ENCODE measurements at regions of chr2 and their contacts with region 1.

Region 1: GRCh38 chr2:239322416-239323086 is 78.3 kb downstream of the HDAC4 start:
- DNase-seq: peak; percentile 41
- ATAC-seq: peak; percentile 1
- H3K4me3 Mint-ChIP-seq: peak overlapping the region; percentile 78
- H3K27ac Mint-ChIP-seq: peak overlapping the region; percentile 99
- H3K4me1 Mint-ChIP-seq: peaks cover 72% of the 10 kb centered on the region
- H3K27me3 Mint-ChIP-seq: no peaks in the 10 kb centered on the region

Region 2: GRCh38 chr2:239267288-239267951 is 55.1 kb before region 1 on chr2:
- POLR2A ChIA-PET with region 1: interaction called, 22 read pairs
- DNase-seq: peak; percentile 85
- ATAC-seq: peak; percentile 77
- H3K4me3 Mint-ChIP-seq: peak overlapping the region; percentile 90
- H3K27ac Mint-ChIP-seq: peak overlapping the region; percentile 97
- H3K4me1 Mint-ChIP-seq: peaks cover 62% of the 10 kb centered on the region
- H3K27me3 Mint-ChIP-seq: no peaks in the 10 kb centered on the region

Region 3: DNA sequence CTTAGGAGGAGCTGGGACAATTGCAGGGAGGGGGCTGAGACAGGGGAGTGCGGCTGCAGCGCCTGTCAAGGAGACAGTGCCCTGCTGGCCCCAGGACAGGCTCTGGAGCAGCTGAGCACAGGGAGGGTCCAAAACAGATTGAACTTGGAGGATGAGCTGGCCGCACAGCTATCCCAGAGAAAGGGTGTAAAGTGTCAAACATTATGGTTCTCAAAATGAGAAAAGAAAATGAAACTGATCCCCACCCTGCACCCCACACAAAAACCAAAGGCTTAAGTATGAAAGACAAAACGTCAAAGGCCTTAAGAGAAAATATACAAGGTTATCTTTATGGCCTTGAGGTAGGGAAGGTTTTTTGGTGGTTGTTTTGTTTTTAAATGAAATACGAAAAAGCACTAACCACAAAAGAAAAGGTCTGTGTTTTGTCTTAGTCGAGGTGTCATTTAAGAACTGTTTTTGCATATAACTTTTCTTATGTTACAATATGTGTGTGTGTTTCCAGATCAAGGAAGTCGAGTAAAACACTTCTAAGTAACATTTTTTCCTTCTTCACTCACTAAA is 33.5 kb before region 1 on chr2:
- POLR2A ChIA-PET with region 1: interaction called, 56 read pairs
- DNase-seq: peak; percentile 60
- ATAC-seq: peak; percentile 57
- H3K4me3 Mint-ChIP-seq: peak overlapping the region; percentile 88
- H3K27ac Mint-ChIP-seq: peak overlapping the region; percentile 99
- H3K4me1 Mint-ChIP-seq: peaks cover 62% of the 10 kb centered on the region
- H3K27me3 Mint-ChIP-seq: no peaks in the 10 kb centered on the region

Region 4: DNA sequence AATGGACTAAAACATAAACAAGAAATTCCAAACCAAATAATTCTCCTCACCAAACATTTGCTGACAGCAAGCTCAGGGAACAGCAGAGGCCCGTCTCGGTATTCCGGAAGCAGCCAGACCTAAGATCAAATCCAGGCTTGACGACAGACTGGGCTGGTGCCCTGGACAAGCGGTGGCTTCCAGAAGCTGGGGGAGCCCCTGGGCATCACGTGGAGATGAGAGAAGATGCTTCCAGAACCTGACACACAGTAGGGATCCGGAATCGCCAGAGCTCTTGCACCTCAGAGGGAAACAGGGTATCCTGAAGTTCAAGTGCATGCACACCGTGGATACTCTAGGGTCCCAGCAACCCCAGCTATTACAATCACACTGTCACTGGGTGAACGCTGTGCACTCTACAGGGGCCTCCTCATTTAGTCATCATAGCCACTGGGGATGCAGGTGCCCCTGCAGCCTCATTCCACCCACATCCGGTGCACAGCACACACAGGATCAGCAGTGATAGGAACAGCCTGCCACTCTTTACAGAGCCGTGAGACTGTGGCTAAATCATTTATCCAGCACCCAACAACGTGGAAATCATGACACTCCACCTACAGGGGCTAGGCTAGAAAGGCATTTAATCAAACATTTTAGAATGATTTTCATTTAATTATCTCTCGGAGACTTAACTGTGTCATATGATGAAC is 24.3 kb before region 1 on chr2:
- POLR2A ChIA-PET with region 1: interaction called, 56 read pairs
- DNase-seq: peak; percentile 75
- ATAC-seq: peak; percentile 93
- H3K4me3 Mint-ChIP-seq: peak overlapping the region; percentile 88
- H3K27ac Mint-ChIP-seq: peak overlapping the region; percentile 95
- H3K4me1 Mint-ChIP-seq: peaks cover 51% of the 10 kb centered on the region
- H3K27me3 Mint-ChIP-seq: no peaks in the 10 kb centered on the region

Region 5: DNA sequence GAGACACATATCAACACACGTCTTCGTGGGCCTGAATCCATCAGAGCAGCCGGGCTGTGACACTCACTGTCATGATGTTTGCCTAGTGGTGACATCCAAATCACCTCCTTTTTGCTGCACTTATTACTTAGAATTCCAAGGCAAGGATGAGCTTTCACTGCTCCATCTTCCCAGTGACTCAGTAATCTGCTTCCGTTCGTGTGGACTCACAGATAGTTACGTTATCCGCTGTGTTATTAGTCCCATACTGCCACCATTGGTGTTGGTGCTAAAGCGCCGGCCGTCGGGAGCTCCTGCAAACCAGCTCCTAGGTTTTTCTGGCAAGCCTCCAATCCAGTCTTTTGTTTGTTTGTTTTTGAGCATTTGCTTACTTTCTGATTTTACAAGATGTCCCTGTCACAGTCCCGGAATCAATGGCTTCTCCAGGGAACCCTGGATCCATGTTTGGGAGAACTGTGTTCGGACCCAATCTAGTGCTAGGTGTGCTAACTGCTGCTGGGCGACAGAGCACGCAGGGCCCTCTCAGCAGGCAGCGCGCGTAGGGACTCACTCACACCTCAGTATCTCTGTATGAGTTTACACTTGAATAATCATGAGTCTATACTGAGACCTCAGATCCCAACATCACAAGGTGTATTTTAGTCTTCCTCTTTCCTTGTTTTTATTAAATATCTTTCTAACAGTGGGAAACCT is 35.7 kb after region 1 on chr2:
- POLR2A ChIA-PET with region 1: no interaction called
- DNase-seq: no peak
- ATAC-seq: no peak
- H3K4me3 Mint-ChIP-seq: no peak overlapping the region
- H3K27ac Mint-ChIP-seq: no peak overlapping the region
- H3K4me1 Mint-ChIP-seq: peaks cover 5% of the 10 kb centered on the region
- H3K27me3 Mint-ChIP-seq: no peaks in the 10 kb centered on the region

Region 6: DNA sequence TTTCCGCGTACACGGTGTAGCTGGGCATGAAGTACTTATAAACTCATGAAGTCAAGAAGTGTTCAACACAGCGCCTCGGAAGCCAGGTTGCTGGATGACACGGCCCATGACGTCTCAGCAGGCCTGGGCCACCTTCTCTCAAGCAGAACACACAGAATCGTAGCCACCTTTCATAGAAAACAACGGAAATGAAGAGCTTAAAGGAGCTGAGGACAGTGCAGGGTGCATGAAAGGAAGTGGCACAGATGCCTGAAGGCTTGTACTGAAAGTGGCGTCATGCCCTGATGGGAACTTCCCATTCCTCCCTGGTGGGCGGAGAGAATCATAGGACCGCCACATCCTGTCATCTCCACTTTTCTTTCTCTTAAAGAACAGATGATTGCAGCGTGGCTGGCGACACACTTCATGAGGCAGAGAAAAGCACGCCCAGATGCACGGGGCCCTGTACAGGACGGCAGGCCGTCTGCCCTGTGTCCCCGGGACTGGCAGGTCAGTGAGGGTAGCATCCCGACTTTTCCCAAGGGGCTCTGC is 47.1 kb after region 1 on chr2:
- POLR2A ChIA-PET with region 1: interaction called, 15 read pairs
- DNase-seq: peak; percentile 54
- ATAC-seq: peak; percentile 97
- H3K4me3 Mint-ChIP-seq: peak overlapping the region; percentile 74
- H3K27ac Mint-ChIP-seq: no peak overlapping the region
- H3K4me1 Mint-ChIP-seq: peaks cover 12% of the 10 kb centered on the region
- H3K27me3 Mint-ChIP-seq: no peaks in the 10 kb centered on the region

Region 7: DNA sequence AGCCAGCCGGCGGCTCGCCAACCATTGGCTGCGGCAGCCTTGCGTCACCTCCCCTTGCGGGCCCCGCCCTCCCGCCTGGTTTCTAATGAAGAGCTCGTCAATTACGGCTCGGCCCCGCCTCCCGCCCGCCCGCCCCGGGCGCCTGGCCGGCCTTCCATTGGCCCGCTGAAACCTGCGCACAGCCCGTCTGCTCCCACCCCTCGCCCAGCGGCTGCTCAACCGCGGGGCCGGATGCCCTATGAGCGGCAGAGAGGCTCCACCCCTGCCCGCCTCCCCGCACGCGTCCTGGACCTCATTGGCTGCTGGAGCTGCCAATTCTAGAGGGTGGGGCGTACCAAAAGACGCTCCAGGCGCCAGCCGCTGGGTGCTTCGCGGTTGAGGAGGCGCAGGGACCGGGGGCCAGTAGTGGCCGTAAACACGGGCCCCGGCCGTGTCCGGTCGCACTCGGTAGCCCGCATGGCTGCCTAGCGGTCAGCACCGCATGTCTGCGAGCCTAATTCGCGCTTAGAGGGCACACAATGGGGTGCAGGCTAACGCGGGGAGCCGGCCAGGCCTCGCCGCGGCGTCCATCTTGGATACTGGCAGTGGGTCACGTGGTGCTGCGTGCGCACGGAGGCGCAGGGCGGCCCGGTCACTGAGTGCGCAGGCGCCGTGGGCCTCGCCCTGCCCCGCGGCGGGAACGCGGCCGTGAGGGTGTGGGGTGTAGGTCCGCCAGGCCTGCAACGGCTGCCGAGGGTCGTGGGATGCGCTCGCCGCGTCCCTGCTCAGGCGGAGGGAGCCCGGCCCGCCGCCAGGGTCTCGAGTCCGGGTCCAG is 78.7 kb after region 1 on chr2:
- POLR2A ChIA-PET with region 1: interaction called, 22 read pairs
- DNase-seq: peak; percentile 99
- ATAC-seq: peak; percentile 93
- H3K4me3 Mint-ChIP-seq: peak overlapping the region; percentile 90
- H3K27ac Mint-ChIP-seq: peak overlapping the region; percentile 94
- H3K4me1 Mint-ChIP-seq: peaks cover 29% of the 10 kb centered on the region
- H3K27me3 Mint-ChIP-seq: peaks cover 6% of the 10 kb centered on the region

Measured in activated naive CD8-positive, alpha-beta T cell treated with anti-CD3 and anti-CD28 coated beads, Interleukin-2, amount 10 ng/mL, durations not matched to agents 7 days and 5 days (primary cell).